B cell (primary cell): ENCODE measurements at regions of chr10 and their contacts with region 1.

Region 1: GRCh38 chr10:132331526-132332432 is at the start of gene LRRC27:
- DNase-seq: peak; percentile 100
- ATAC-seq: peak; percentile 78
- H3K4me3 ChIP-seq: peak within 1 kb of the TSS; percentile 81 to 95 (median 90)
- H3K4me3 Mint-ChIP-seq: peak within 1 kb of the TSS; percentile 83
- H3K27ac ChIP-seq: peak within 1 kb of the TSS; percentile 93 to 96
- H3K27ac Mint-ChIP-seq: peak within 1 kb of the TSS; percentile 99
- H3K4me1 ChIP-seq: peaks cover 50 to 60% of the 10 kb centered on the region in 2 donors
- H3K4me1 Mint-ChIP-seq: peaks cover 75% of the 10 kb centered on the region
- H3K27me3 ChIP-seq: no peaks in the 10 kb centered on the region
- H3K27me3 Mint-ChIP-seq: no peaks in the 10 kb centered on the region
- CTCF ChIP-seq: no peak
- total RNA-seq, gene LRRC27: 23.6 and 32.2 TPM in 2 replicates

Region 2: DNA sequence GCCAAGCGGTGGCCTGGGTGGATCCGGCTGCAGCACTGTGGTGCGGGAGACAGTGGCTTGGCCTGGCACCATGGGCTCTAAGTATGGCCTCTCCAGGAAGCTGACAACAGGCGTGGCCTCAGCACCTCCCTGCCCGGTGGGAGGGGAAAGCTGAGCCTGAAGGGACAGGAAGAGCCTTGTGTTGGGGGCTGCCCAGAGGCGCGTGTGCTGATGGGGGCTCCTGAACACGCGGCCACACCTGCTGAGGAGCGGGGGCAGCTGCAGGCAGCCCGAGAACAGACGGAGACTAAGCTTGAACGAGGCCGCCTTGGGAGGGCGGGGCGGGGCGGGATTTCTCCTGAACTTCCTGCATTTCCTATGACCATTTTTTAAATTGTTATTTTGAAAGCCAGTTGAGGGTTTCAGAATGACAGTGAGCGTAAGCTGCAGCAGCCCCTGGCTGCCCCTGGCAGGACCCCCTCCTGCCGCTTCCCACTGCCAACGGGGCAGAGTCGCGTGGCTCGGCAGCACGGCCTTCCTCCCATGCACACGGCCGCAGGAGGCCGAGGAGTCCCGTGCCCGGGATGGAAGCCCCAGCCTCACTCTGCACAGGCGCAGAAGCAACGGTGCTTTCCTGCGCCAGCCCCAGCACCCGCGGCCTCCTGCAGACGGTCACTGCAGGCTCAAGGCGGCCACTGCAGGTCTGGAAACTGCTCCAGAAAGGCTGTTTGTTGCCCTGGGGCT is 101.8 kb before region 1 on chr10:
- CTCF ChIA-PET with region 1: no interaction called
- POLR2A ChIA-PET with region 1: no interaction called
- intact Hi-C with region 1: no loop called
- DNase-seq: no peak
- ATAC-seq: peak; percentile 19
- H3K4me3 ChIP-seq: peak overlapping the region in 4 of 5 experiments; percentile 10 to 51 (median 44)
- H3K4me3 Mint-ChIP-seq: peak overlapping the region; percentile 91
- H3K27ac ChIP-seq: no peak overlapping the region
- H3K27ac Mint-ChIP-seq: peak overlapping the region; percentile 83
- H3K4me1 ChIP-seq: peaks cover 17 to 34% of the 10 kb centered on the region in 2 donors
- H3K4me1 Mint-ChIP-seq: peaks cover 33% of the 10 kb centered on the region
- H3K27me3 ChIP-seq: no peaks in the 10 kb centered on the region
- H3K27me3 Mint-ChIP-seq: no peaks in the 10 kb centered on the region
- CTCF ChIP-seq: no peak

Region 3: GRCh38 chr10:132403461-132404168 is 71.8 kb after region 1 on chr10:
- CTCF ChIA-PET with region 1: no interaction called
- POLR2A ChIA-PET with region 1: no interaction called
- intact Hi-C with region 1: no loop called
- DNase-seq: no peak
- ATAC-seq: no peak
- H3K4me3 ChIP-seq: no peak overlapping the region
- H3K4me3 Mint-ChIP-seq: no peak overlapping the region
- H3K27ac ChIP-seq: no peak overlapping the region
- H3K27ac Mint-ChIP-seq: no peak overlapping the region
- H3K4me1 ChIP-seq: peaks cover 55 to 56% of the 10 kb centered on the region in 2 donors
- H3K4me1 Mint-ChIP-seq: peaks cover 58% of the 10 kb centered on the region
- H3K27me3 ChIP-seq: no peaks in the 10 kb centered on the region
- H3K27me3 Mint-ChIP-seq: no peaks in the 10 kb centered on the region
- CTCF ChIP-seq: no peak

Region 4: DNA sequence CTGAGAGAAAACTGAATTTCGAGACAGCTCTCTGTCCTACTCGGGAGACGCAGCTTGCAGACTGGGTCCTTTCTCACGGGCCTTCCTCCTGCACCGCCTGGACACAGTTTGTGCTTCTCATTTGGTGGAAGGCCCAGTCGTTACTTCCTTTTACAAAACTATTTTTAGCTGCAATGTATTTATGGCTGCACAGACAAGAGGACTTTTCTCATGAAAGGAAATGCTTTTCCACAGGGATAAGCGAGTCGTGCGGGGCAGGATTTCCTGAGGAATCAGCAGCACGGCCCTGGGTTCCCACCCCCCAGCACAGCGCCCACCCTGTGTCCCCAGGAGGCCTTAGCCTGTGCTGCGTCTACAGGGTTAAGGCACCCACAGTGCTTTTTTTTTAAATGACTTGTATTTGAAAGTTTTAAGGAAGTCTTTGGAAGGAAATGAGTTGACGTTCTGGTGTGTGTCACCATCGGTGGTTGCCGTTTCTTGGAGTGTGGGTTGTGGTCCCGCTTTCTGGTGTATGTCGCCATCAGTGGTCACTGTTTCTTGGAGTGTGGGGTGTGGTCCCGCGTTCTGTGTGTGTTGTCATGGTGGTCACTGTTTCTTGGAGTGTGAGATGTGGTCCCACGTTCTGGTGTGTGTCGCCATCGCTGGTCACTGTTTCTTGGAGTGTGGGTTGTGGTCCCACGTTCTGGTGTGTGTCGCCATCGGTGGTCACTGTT is 256.7 kb after region 1 on chr10:
- CTCF ChIA-PET with region 1: no interaction called
- POLR2A ChIA-PET with region 1: no interaction called
- intact Hi-C with region 1: loop called (anchors 5 kb)
- DNase-seq: peak; percentile 80
- ATAC-seq: peak; percentile 62
- H3K4me3 ChIP-seq: peak overlapping the region in 4 of 5 experiments; percentile 18 to 47 (median 36)
- H3K4me3 Mint-ChIP-seq: peak overlapping the region; percentile 89
- H3K27ac ChIP-seq: peak overlapping the region; percentile 82 to 86
- H3K27ac Mint-ChIP-seq: peak overlapping the region; percentile 95
- H3K4me1 ChIP-seq: peaks cover 57 to 71% of the 10 kb centered on the region in 2 donors
- H3K4me1 Mint-ChIP-seq: peaks cover 82% of the 10 kb centered on the region
- H3K27me3 ChIP-seq: no peaks in the 10 kb centered on the region
- H3K27me3 Mint-ChIP-seq: no peaks in the 10 kb centered on the region
- CTCF ChIP-seq: no peak